Head of caudate nucleus (tissue), 42 donors: ENCODE measurements at regions of chr17 and their contacts with region 1.

Region 1: GRCh38 chr17:52594516-52594915 is 436.0 kb upstream of the CA10 start:
- DNase-seq: no peak

Region 2: DNA sequence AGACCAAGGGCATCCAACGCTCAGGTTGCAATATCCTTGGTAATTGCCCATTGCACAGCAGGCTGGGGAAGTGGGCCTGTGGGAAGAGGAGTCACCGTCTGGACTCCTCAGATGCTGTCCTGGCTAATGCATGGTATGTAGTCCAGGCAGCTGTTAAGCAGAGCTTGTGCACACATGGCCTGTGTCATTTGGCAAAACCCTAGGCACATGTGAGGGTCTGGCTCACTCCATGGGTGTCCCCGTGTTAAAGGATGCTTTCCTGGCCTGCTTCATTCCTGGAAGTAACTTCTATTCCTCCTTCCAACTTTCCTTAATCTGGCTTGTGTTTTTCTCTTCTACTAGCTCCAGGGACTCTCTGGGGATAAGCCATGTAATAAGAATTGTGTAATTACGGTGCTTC is 58.0 kb before region 1 on chr17:
- intact Hi-C with region 1: loop called (anchors 10 kb)
- DNase-seq: no peak

Region 3: GRCh38 chr17:52827526-52827925 is 233.0 kb after region 1 on chr17:
- intact Hi-C with region 1: no loop called
- DNase-seq: no peak